ENCODE measurements at regions of chr5 and their contacts with region 1.

Region 1: GRCh38 chr5:18465833-18466591 is 831.8 kb downstream of the TAF11L14 start:
- DNase-seq: no peak
- H3K4me3 ChIP-seq: no peak overlapping the region
- H3K27ac ChIP-seq: no peak overlapping the region
- H3K4me1 ChIP-seq: no peaks in the 10 kb centered on the region
- H3K27me3 ChIP-seq: no peaks in the 10 kb centered on the region
- CTCF ChIP-seq: peak in 2 of 4 experiments; percentile 25 to 55
- EP300 ChIP-seq: no peak
- POLR2A ChIP-seq: no peak

Region 2: GRCh38 chr5:18438126-18438525 is 27.9 kb before region 1 on chr5:
- intact Hi-C with region 1: no loop called
- DNase-seq: no peak
- H3K4me3 ChIP-seq: no peak overlapping the region
- H3K27ac ChIP-seq: no peak overlapping the region
- H3K4me1 ChIP-seq: no peaks in the 10 kb centered on the region
- H3K27me3 ChIP-seq: no peaks in the 10 kb centered on the region
- CTCF ChIP-seq: no peak
- EP300 ChIP-seq: no peak
- POLR2A ChIP-seq: no peak

Region 3: GRCh38 chr5:18699681-18700080 is 233.7 kb after region 1 on chr5:
- intact Hi-C with region 1: loop called (anchors 10 kb)
- DNase-seq: no peak
- H3K4me3 ChIP-seq: no peak overlapping the region
- H3K27ac ChIP-seq: no peak overlapping the region
- H3K4me1 ChIP-seq: no peaks in the 10 kb centered on the region
- H3K27me3 ChIP-seq: no peaks in the 10 kb centered on the region
- CTCF ChIP-seq: no peak
- EP300 ChIP-seq: no peak
- POLR2A ChIP-seq: no peak

Measured in sigmoid colon (tissue), 7 donors.